HepG2 (cell line): ENCODE measurements at regions of chr2 and their contacts with region 1.

Region 1: GRCh38 chr2:113198790-113199612 is 25.2 kb downstream of the PSD4 start:
- DNase-seq: peak; percentile 73
- ATAC-seq: peak; percentile 86
- H3K4me3 ChIP-seq: peak overlapping the region; percentile 68 to 83 (median 80)
- H3K27ac ChIP-seq: peak overlapping the region; percentile 46
- H3K4me1 ChIP-seq: peaks cover 55% of the 10 kb centered on the region
- H3K27me3 ChIP-seq: no peaks in the 10 kb centered on the region; a peak in 1 of 5 replicates
- CTCF ChIP-seq: peak; percentile 96
- EP300 ChIP-seq: peak; percentile 38 to 58; a peak in 3 of 4 replicates
- POLR2A ChIP-seq: peak in 1 of 2 experiments; percentile 64; a peak in 2 of 4 replicates
- RAD21 ChIP-seq: peak; percentile 99

Region 2: DNA sequence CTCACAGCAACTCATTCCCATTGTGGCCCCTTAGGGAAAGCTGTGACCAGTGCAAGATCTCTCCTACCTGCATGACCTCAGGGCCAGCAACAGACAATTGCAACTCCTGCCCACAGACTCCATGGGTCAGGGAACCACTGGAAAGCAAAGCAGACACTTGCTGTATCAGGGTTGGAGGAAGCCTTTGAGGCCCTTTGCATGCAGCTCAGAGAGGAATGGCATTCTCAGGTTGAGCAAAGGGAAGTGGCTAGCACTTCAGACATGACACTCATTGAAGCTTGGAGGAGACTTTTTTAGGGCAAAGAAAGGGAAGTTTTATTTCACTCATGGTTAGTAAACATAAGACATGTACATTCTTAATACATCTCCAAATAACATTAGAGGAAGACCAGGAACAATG is 109.1 kb before region 1 on chr2:
- CTCF ChIA-PET with region 1: interaction called, 10 read pairs
- POLR2A ChIA-PET with region 1: interaction called, 12 read pairs
- in situ Hi-C with region 1: no loop called
- intact Hi-C with region 1: no loop called
- DNase-seq: no peak
- ATAC-seq: no peak
- H3K4me3 ChIP-seq: no peak overlapping the region
- H3K27ac ChIP-seq: no peak overlapping the region
- H3K4me1 ChIP-seq: peaks cover 38% of the 10 kb centered on the region
- H3K27me3 ChIP-seq: no peaks in the 10 kb centered on the region; a peak in 1 of 5 replicates
- CTCF ChIP-seq: no peak
- EP300 ChIP-seq: no peak
- POLR2A ChIP-seq: no peak
- RAD21 ChIP-seq: no peak

Region 3: DNA sequence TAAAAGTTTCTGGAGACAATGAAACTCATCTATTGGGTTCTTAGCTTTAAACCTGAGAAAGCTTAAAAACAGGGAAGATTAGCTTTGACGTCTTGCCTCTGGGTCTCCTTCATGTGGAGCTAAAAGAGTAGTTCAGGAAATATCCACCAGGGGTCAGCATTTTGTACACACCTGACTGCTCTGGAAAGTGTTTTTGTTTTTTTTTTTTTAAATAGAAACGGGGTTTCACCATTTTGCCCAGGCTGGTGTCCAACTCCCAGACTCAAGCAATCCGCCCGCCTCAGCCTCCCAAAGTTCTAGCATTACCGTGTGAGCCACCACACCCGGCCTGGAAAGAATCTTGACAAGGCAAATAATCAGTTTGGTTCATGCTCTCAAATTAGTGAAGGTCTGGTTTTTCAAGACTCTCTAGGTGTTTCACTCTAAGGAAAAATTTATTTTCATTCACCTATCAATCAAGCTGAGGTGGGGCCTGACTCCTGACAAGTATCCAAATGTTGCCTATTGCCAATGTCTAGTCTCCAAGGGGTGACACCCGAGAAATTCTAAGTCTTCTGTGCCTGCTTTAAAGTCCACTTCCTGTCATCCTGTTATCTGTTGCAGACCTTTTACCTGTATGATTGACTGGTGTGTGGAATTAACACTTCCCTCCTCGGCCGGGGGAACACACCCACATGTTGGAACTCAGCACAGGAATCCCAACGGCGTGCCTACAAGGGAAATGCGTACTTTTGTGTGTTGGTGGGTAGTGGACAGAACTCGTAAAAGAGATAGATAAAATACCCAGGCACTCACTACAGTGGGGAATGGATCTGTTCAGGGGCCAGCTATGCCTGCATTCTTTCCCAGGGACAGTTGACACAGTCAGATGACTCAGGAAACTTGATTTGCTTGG is 60.3 kb before region 1 on chr2:
- CTCF ChIA-PET with region 1: interaction called, 80 read pairs
- POLR2A ChIA-PET with region 1: interaction called, 63 read pairs
- in situ Hi-C with region 1: loop called (anchors 5 kb)
- intact Hi-C with region 1: loop called (anchors 1 kb)
- DNase-seq: peak; percentile 76
- ATAC-seq: peak; percentile 78
- H3K4me3 ChIP-seq: peak overlapping the region; percentile 11 to 52 (median 36); a peak in 4 of 6 replicates
- H3K27ac ChIP-seq: no peak overlapping the region
- H3K4me1 ChIP-seq: peaks cover 55% of the 10 kb centered on the region
- H3K27me3 ChIP-seq: peaks cover 0 to 11% of the 10 kb centered on the region in 2 experiments; a peak in 1 of 5 replicates
- CTCF ChIP-seq: peak; percentile 82
- EP300 ChIP-seq: no peak
- POLR2A ChIP-seq: no peak
- RAD21 ChIP-seq: peak; percentile 61

Region 4: DNA sequence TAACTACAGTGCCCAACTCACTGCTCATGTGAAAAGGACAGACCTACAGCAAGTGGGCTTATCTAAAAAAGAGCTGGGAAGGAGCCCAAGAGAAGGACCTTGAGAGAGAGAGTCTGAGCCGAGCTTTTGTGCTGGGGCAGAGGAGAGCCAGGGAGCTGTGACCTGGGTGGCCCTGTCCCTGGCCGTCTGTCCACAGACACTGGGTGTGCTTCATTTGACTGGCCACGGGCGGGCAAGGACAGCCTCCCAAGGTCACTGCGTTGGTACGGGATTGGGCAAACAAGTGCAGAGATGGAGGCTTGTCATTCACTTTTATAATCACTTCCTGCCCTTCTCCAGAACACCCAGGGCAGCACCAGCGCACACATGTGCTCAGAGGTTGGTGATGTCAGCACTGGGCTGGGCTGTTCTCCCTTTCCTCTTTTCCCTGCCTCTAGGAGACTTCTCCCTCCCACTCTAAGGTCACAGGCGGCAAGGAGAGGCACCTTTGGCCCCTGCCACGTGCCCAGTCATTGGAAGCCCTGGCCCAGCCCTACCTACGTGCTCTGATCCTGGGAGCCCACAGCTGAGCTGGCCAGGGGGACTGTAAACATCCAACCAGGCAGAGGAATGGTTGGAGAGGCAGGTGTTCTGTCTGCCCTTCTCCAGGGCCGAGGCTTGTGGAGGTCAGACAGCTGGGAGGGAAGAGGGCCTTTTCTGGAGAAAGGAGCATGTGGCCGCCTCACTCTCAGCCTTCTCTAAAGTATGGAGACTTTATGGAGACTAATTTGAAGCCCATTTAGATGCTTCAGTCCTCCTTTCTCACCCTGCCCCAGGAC is 31.7 kb before region 1 on chr2:
- CTCF ChIA-PET with region 1: interaction called, 3 read pairs
- POLR2A ChIA-PET with region 1: interaction called, 66 read pairs
- in situ Hi-C with region 1: no loop called
- intact Hi-C with region 1: no loop called
- DNase-seq: peak; percentile 93
- ATAC-seq: peak; percentile 89
- H3K4me3 ChIP-seq: peak overlapping the region in 2 of 3 experiments; percentile 0 to 37; a peak in 3 of 6 replicates
- H3K27ac ChIP-seq: peak overlapping the region; percentile 75
- H3K4me1 ChIP-seq: peaks cover 71% of the 10 kb centered on the region
- H3K27me3 ChIP-seq: no peaks in the 10 kb centered on the region
- CTCF ChIP-seq: peak; percentile 40; the same call in 1 of the 2 replicates
- EP300 ChIP-seq: peak; percentile 7 to 75; a peak in 2 of 4 replicates
- POLR2A ChIP-seq: peak; percentile 89 to 93
- RAD21 ChIP-seq: 0 out of 2 replicates have a peak, but pooled peaks have one; percentile 9

Region 5: GRCh38 chr2:113181258-113182051 is 17.5 kb before region 1 on chr2:
- CTCF ChIA-PET with region 1: no interaction called
- POLR2A ChIA-PET with region 1: interaction called, 46 read pairs
- in situ Hi-C with region 1: no loop called
- intact Hi-C with region 1: no loop called
- DNase-seq: peak; percentile 50
- ATAC-seq: peak; percentile 51
- H3K4me3 ChIP-seq: peak overlapping the region in 1 of 3 experiments; percentile 30; a peak in 1 of 6 replicates
- H3K27ac ChIP-seq: no peak overlapping the region
- H3K4me1 ChIP-seq: peaks cover 51% of the 10 kb centered on the region
- H3K27me3 ChIP-seq: no peaks in the 10 kb centered on the region
- CTCF ChIP-seq: 0 out of 2 replicates have a peak, but pooled peaks have one; percentile 2
- EP300 ChIP-seq: 0 out of 4 replicates have a peak, but pooled peaks of 1 of the 2 experiments have one; percentile 19
- POLR2A ChIP-seq: peak in 1 of 2 experiments; percentile 31; a peak in 1 of 4 replicates
- RAD21 ChIP-seq: no peak

Region 6: GRCh38 chr2:113240150-113240862 is 41.3 kb after region 1 on chr2:
- CTCF ChIA-PET with region 1: no interaction called
- POLR2A ChIA-PET with region 1: interaction called, 13 read pairs
- in situ Hi-C with region 1: no loop called
- intact Hi-C with region 1: loop called (anchors 2 kb)
- DNase-seq: no peak
- ATAC-seq: peak; percentile 31
- H3K4me3 ChIP-seq: 0 out of 6 replicates have a peak overlapping the region, but pooled peaks of 1 of the 3 experiments have one; percentile 23
- H3K27ac ChIP-seq: no peak overlapping the region
- H3K4me1 ChIP-seq: peaks cover 68% of the 10 kb centered on the region
- H3K27me3 ChIP-seq: no peaks in the 10 kb centered on the region; a peak in 1 of 5 replicates
- CTCF ChIP-seq: no peak
- EP300 ChIP-seq: no peak
- POLR2A ChIP-seq: no peak
- RAD21 ChIP-seq: no peak

Region 7: GRCh38 chr2:113266431-113266830 is 67.4 kb after region 1 on chr2:
- CTCF ChIA-PET with region 1: no interaction called
- POLR2A ChIA-PET with region 1: no interaction called
- in situ Hi-C with region 1: no loop called
- intact Hi-C with region 1: no loop called
- DNase-seq: no peak
- ATAC-seq: no peak
- H3K4me3 ChIP-seq: no peak overlapping the region
- H3K27ac ChIP-seq: no peak overlapping the region
- H3K4me1 ChIP-seq: no peaks in the 10 kb centered on the region
- H3K27me3 ChIP-seq: peaks cover 5 to 12% of the 10 kb centered on the region in 2 experiments; a peak in 4 of 5 replicates
- CTCF ChIP-seq: no peak
- EP300 ChIP-seq: no peak
- POLR2A ChIP-seq: no peak
- RAD21 ChIP-seq: no peak